SK-N-SH (cell line): ENCODE measurements at regions of chr2 and their contacts with region 1.

Region 1: GRCh38 chr2:127591221-127591923 is 54.6 kb upstream of the GPR17 start:
- DNase-seq: peak; percentile 82
- H3K4me3 ChIP-seq: no peak overlapping the region; a peak in 1 of 4 replicates
- H3K27ac ChIP-seq: no peak overlapping the region
- H3K4me1 ChIP-seq: no peaks in the 10 kb centered on the region
- H3K27me3 ChIP-seq: no peaks in the 10 kb centered on the region
- CTCF ChIP-seq: peak; percentile 74
- EP300 ChIP-seq: no peak
- RAD21 ChIP-seq: peak; percentile 89

Region 2: GRCh38 chr2:127342101-127342500 is 249.3 kb before region 1 on chr2:
- CTCF ChIA-PET with region 1: no interaction called
- POLR2A ChIA-PET with region 1: no interaction called
- DNase-seq: no peak
- H3K4me3 ChIP-seq: no peak overlapping the region
- H3K27ac ChIP-seq: no peak overlapping the region
- H3K4me1 ChIP-seq: peaks cover 0 to 16% of the 10 kb centered on the region in 2 experiments; a peak in 1 of 4 replicates
- H3K27me3 ChIP-seq: no peaks in the 10 kb centered on the region
- CTCF ChIP-seq: no peak
- EP300 ChIP-seq: no peak
- RAD21 ChIP-seq: no peak

Region 3: DNA sequence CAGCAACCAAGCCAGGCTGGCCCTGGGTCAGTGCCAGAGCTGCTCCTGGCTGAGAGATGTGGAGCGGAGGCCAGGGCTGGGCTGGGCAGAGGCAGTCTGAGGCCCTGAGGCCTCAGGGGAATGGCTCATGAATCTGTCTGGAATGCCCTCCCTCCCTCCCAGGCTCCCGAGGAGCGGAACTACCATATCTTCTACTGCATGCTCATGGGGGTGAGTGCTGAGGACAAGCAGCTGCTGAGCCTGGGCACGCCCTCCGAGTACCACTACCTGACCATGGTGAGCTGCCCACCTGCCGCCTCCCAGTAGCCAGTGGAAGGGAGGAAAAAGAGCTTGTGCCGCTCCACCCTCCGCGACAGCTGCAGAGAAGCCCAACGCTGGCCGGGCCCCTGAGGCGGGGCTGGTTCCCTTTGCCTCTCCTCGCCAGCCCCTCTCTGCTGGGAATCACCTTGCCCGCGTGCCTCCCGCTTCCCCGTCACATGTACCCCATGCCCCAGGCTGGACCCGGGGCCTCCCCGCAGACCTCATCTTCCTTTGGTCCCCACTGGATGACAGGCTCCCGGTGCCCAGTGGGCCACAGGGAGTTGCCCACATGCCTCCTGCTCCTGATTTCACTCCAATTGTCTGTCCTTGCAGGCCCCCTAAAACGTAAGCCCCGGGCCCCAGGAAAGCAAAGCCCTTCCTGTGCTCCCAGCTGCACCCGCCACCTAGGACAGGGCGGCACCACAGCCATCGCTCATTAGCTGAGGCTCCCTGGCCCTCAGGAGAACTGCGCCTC is 14.8 kb before region 1 on chr2:
- CTCF ChIA-PET with region 1: interaction called, 16 read pairs
- POLR2A ChIA-PET with region 1: no interaction called
- DNase-seq: peak; percentile 82
- H3K4me3 ChIP-seq: no peak overlapping the region
- H3K27ac ChIP-seq: no peak overlapping the region
- H3K4me1 ChIP-seq: peaks cover 0 to 14% of the 10 kb centered on the region in 2 experiments; a peak in 1 of 4 replicates
- H3K27me3 ChIP-seq: no peaks in the 10 kb centered on the region
- CTCF ChIP-seq: no peak
- EP300 ChIP-seq: no peak
- RAD21 ChIP-seq: no peak

Region 4: DNA sequence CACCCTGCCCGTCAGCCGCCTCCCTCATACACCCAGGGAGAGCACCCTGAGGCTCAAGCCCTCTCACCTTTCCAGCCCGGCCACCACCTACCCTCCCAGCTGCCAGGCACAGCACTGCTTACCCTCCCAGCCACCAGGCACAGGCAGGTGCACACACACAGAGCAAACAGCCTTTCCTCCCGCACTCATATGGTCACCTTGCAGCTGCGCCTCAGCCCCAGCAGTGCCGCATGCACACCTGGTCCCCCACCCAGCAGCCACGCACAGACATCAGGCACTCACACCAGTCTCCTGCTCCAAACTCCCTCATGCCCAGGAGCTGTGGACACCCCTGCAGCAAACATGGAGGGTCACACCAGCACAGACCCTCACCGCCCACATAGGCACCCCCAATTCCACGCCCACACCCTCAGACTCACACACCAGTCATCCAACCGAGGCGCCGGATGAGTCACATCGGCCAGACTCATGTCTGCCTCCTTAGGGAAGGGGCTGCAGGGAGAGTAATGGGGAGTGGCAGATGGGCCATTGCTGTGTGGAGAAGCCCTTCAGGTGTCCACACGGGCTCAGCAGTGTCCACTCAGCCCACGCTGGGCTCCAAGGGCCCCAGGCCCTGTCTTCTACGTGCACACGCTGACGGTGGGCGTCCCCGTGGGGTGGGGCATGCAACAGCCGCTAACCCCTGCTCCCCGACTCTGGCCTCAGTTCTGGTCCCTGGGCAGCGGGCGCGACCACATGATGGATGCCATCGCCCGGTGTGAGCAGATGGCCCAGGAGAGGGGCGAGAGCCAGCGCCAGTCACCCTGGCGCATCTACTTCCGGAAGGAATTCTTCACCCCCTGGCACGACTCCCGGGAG is 32.2 kb after region 1 on chr2:
- CTCF ChIA-PET with region 1: interaction called, 12 read pairs
- POLR2A ChIA-PET with region 1: no interaction called
- DNase-seq: peak; percentile 17
- H3K4me3 ChIP-seq: no peak overlapping the region
- H3K27ac ChIP-seq: no peak overlapping the region
- H3K4me1 ChIP-seq: no peaks in the 10 kb centered on the region
- H3K27me3 ChIP-seq: no peaks in the 10 kb centered on the region
- CTCF ChIP-seq: no peak
- EP300 ChIP-seq: no peak
- RAD21 ChIP-seq: no peak

Region 5: DNA sequence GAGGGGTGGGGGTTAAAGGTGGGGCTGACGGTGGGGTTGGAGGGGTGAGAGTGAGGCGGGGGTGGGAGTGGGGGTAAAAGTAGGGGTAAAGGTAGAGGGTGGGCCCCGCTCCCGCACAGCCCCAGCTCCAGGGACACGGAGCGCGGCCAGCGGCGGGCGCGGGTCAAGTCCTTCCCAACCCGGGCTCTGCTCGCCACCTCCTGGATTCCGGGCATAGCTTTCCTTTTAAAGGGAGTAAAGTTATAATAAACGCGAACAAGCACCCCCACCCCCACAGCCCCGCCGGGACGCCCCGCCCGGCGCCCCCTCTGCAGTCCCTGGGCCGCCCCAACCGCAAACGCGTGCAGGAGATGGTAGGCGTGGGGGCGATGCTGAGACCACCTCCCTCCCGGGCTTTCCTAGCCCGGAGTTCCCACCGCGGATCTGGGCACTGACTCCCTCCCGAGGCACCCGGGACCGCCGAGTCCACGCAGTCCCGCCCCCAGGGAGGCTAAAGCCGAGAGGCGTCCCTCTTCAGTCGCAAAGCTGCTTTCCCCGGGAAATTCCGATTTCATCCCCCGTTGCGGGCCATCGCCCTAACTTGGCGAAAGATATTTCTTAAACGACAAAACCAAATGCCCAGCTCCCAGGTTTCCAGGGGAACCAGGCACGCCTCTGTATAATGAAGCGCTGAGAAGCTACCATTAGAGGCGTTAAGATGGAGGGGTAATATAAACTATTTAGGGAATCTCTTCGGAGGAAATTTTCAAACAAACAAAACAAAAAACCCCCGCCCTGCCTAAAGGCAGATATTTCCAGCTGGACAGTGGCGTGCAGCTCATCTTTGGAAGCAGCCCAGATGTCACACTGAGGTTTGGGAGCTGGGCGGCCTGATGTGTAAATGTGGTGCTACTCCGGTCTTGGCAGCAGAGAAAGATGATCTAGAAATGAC is 84.2 kb after region 1 on chr2 and contains the start of gene LIMS2:
- CTCF ChIA-PET with region 1: interaction called, 21 read pairs
- POLR2A ChIA-PET with region 1: no interaction called
- DNase-seq: peak; percentile 85
- H3K4me3 ChIP-seq: peak within 1 kb of the TSS; percentile 58 to 85
- H3K27ac ChIP-seq: no peak within 1 kb of the TSS
- H3K4me1 ChIP-seq: peaks cover 0 to 6% of the 10 kb centered on the region in 2 experiments; a peak in 1 of 4 replicates
- H3K27me3 ChIP-seq: peaks cover 14% of the 10 kb centered on the region; the same call in 1 of the 2 replicates
- CTCF ChIP-seq: 0 out of 2 replicates have a peak, but pooled peaks have one; percentile 16
- EP300 ChIP-seq: no peak
- RAD21 ChIP-seq: peak; percentile 57
- polyA plus RNA-seq, gene LIMS2: 2.2 and 2.7 TPM in 2 replicates

Region 6: GRCh38 chr2:127701193-127701650 is 109.8 kb after region 1 on chr2 and contains the start of gene SFT2D3:
- CTCF ChIA-PET with region 1: interaction called, 22 read pairs
- POLR2A ChIA-PET with region 1: no interaction called
- DNase-seq: peak; percentile 95
- H3K4me3 ChIP-seq: peak within 1 kb of the TSS; percentile 60 to 81
- H3K27ac ChIP-seq: peak within 1 kb of the TSS; percentile 64 to 95
- H3K4me1 ChIP-seq: peaks cover 6 to 16% of the 10 kb centered on the region in 2 experiments; a peak in 3 of 4 replicates
- H3K27me3 ChIP-seq: no peaks in the 10 kb centered on the region
- CTCF ChIP-seq: no peak
- EP300 ChIP-seq: no peak
- RAD21 ChIP-seq: no peak
- polyA plus RNA-seq, gene SFT2D3: 3.2 and 3.9 TPM in 2 replicates